Activated T-helper 1 cell treated with anti-CD3 and anti-CD28 coated beads, Interleukin-12 subunit alpha, Interleukin-12 subunit beta, Interleukin-2, Interleukin-4 antibody, amounts not matched to agents 30 ng/mL and 10 ng/mL and 1 ng/mL, durations not matched to agents 14 hours and 24 hours and 36 hours (primary cell): ENCODE measurements at regions of chr5 and their contacts with region 1.

Region 1: GRCh38 chr5:16616536-16617273 is at the start of gene RETREG1:
- DNase-seq: peak; percentile 80
- H3K4me3 Mint-ChIP-seq: peak within 1 kb of the TSS; percentile 97
- H3K27ac Mint-ChIP-seq: peak within 1 kb of the TSS; percentile 97
- H3K4me1 Mint-ChIP-seq: peaks cover 45% of the 10 kb centered on the region
- H3K27me3 Mint-ChIP-seq: no peaks in the 10 kb centered on the region
- total RNA-seq, gene RETREG1: 22.4 and 22.5 TPM in 2 replicates

Region 2: DNA sequence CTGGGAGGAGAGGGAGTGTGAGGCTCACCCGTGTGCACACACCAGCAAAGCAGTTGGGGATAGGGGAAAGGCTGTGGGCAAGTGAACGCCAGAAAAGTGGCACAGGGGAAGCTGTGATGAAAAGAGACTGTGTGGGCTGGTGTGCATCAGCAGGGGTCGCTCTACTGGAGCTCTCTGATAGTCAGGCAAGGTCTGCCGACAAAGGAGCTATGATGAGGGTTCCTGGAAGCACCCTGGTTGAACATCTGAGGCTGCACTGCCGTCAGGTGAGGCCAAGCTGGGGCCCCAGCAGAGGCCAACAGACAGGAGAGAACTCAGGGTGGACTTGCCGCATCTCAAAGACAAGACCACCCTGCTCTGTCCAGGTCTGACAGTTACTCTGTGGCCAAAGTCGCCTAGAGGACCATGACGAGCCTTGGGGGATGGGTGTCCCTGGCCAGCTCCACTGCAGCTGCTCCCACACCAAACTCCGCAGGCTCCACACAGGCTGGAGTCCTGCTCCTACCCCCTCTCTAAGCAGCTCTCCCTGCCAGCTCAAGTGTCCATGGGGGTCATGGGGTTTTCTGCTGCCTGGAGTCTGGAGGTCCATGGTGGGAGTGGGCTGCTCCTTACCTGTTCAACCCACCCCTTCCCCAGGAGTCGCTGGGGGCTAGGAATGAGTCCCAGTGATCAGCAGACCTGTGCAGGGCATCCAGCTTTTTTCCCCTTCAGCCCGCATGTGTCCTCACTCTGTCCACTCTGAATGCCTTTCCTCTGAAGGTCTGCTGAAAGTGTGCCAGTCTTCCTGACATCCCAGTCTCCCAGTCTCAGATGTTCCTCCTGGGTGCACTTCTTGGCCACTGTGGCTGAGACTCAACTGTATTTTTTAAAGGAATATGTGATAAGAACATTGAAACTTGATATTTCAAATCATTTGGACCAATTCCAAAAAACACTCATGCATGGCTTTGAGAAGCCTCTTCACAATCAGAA is 1484.0 kb before region 1 on chr5:
- intact Hi-C with region 1: no loop called
- DNase-seq: no peak
- H3K4me3 Mint-ChIP-seq: no peak overlapping the region
- H3K27ac Mint-ChIP-seq: no peak overlapping the region
- H3K4me1 Mint-ChIP-seq: no peaks in the 10 kb centered on the region
- H3K27me3 Mint-ChIP-seq: no peaks in the 10 kb centered on the region

Region 3: DNA sequence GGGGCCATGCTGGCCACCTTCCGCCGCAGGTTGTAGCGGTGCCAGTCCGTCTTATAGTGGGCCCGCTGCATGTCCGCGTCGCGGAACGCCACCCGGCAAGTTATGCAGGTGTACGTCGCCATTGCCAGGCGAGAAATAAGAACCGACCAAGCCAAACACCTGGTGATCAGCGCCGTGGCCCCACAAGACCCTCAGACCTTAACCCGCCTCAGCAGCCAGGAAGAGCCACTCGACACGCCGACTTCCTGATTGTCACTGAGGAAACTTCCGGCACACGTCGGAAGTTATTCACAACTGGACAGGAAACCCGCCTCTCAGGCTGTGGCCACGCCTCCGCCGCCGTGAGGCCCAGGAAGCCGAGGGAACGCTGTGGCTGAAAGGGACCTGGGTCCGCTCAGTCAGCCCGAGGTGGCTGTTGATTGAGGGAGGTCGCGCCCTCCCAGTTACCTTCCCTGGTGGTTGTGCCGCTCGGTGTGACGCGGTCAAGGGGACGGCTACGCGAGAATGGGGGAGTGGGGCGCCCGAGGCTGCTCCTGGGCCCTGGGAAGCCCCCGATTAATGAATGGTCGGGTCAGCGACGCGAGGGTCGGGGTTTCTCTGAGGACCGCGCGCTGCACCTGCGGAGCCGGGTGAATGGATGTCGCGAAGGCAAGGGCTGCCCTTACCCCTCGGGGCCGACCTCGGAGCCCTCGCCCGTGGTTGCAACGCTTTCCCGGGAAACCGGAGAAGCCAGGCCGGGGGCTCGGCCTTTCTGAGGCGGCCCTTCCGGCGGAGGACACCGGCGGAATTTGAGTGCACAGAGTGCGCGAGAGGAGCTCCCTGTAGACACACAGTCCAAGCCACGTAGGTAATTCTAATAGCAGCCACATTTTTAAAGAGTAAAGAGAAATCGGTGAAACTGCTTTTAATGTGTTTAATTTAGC is 150.9 kb before region 1 on chr5 and contains the start of gene ZNF622:
- intact Hi-C with region 1: loop called (anchors 2 kb)
- DNase-seq: peak; percentile 86
- H3K4me3 Mint-ChIP-seq: peak within 1 kb of the TSS; percentile 99
- H3K27ac Mint-ChIP-seq: peak within 1 kb of the TSS; percentile 95
- H3K4me1 Mint-ChIP-seq: peaks cover 66% of the 10 kb centered on the region
- H3K27me3 Mint-ChIP-seq: no peaks in the 10 kb centered on the region
- total RNA-seq, gene ZNF622: 54.4 and 55.6 TPM in 2 replicates

Region 4: GRCh38 chr5:16600397-16600796 is 16.3 kb before region 1 on chr5:
- intact Hi-C with region 1: no loop called
- DNase-seq: no peak
- H3K4me3 Mint-ChIP-seq: no peak overlapping the region
- H3K27ac Mint-ChIP-seq: no peak overlapping the region
- H3K4me1 Mint-ChIP-seq: peaks cover 28% of the 10 kb centered on the region
- H3K27me3 Mint-ChIP-seq: no peaks in the 10 kb centered on the region

Region 5: DNA sequence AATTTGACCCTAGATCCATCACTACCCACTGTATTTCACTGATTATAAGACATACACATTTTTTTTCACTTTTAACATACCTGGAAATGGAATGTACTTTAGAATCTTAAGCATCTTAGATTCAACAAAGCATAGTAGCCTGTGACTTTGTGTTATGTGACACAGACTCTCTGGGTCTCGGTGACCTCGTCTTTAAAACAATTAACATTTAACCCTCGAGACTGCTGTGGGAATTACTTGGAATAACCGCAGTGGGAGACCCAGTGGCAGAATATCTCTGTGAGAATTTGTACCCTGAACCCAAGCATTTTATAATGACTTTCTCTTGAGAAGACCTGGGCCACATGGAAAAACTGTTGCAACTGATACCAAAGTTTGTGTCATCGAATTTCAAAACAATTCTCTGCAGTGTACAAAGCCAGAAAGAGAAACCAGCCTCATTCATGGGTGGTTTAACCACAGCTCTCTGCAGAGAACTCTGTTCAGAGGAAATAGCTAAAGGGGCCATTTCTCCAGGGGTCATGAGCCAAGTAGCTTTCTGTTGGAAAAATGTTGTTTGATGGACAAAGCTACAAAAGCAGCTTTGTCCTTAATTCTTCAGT is 10.1 kb after region 1 on chr5:
- intact Hi-C with region 1: loop called (anchors 1 kb)
- DNase-seq: peak; percentile 43
- H3K4me3 Mint-ChIP-seq: peak overlapping the region; percentile 28
- H3K27ac Mint-ChIP-seq: peak overlapping the region; percentile 45
- H3K4me1 Mint-ChIP-seq: peaks cover 43% of the 10 kb centered on the region
- H3K27me3 Mint-ChIP-seq: no peaks in the 10 kb centered on the region

Region 6: DNA sequence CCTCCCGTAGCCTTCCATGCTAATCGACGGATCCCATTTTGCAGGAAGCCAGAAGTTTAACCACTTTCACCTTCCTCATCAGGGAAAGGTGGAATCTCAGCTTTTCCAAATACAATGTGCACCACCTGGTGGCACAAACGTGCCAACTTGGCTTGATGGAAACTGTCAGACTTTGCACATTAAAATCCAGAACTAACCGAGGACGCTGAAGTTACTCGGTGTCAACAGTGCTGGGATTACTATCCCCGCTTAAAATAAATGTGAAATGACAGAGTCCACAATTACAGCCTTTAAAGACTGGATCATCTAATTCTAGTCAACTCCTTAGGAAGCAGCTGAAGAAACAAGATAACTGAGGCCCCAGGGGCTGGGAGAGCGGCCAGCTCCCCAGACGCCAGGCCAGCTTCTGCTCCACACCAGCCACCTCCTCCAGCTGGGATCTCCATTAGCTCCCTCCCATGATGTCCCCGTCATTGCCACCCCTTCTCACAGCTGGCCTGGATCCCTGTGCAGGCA is 50.2 kb after region 1 on chr5:
- intact Hi-C with region 1: loop called (anchors 2 kb)
- DNase-seq: no peak
- H3K4me3 Mint-ChIP-seq: no peak overlapping the region
- H3K27ac Mint-ChIP-seq: no peak overlapping the region
- H3K4me1 Mint-ChIP-seq: no peaks in the 10 kb centered on the region
- H3K27me3 Mint-ChIP-seq: peaks cover 3% of the 10 kb centered on the region

Region 7: GRCh38 chr5:16727755-16728325 is 111.1 kb after region 1 on chr5:
- intact Hi-C with region 1: no loop called
- DNase-seq: no peak
- H3K4me3 Mint-ChIP-seq: no peak overlapping the region
- H3K27ac Mint-ChIP-seq: no peak overlapping the region
- H3K4me1 Mint-ChIP-seq: no peaks in the 10 kb centered on the region
- H3K27me3 Mint-ChIP-seq: peaks cover 2% of the 10 kb centered on the region

Region 8: GRCh38 chr5:16934123-16934522 is 317.4 kb after region 1 on chr5:
- intact Hi-C with region 1: loop called (anchors 10 kb)
- DNase-seq: no peak
- H3K4me3 Mint-ChIP-seq: peak overlapping the region; percentile 58
- H3K27ac Mint-ChIP-seq: no peak overlapping the region
- H3K4me1 Mint-ChIP-seq: peaks cover 25% of the 10 kb centered on the region
- H3K27me3 Mint-ChIP-seq: peaks cover 55% of the 10 kb centered on the region